ENCODE measurements at regions of chr3 and their contacts with region 1.

Region 1: GRCh38 chr3:107421170-107421792 is 44.0 kb downstream of the CCDC54 start:
- DNase-seq: no peak
- ATAC-seq: peak; percentile 72
- H3K4me3 Mint-ChIP-seq: peak overlapping the region; percentile 49; the same call in 1 of the 2 replicates
- H3K27ac Mint-ChIP-seq: peak overlapping the region; percentile 94; the same call in 1 of the 2 replicates
- H3K4me1 Mint-ChIP-seq: peaks cover 2% of the 10 kb centered on the region
- H3K27me3 Mint-ChIP-seq: no peaks in the 10 kb centered on the region
- CTCF ChIP-seq: peak; percentile 38

Region 2: GRCh38 chr3:107235928-107236315 is 185.4 kb before region 1 on chr3:
- CTCF ChIA-PET with region 1: interaction called, 19 read pairs
- POLR2A ChIA-PET with region 1: no interaction called
- DNase-seq: no peak
- ATAC-seq: peak; percentile 59
- H3K4me3 Mint-ChIP-seq: peak overlapping the region; percentile 1
- H3K27ac Mint-ChIP-seq: no peak overlapping the region
- H3K4me1 Mint-ChIP-seq: peaks cover 26% of the 10 kb centered on the region
- H3K27me3 Mint-ChIP-seq: peaks cover 11% of the 10 kb centered on the region
- CTCF ChIP-seq: peak; percentile 66

Region 3: DNA sequence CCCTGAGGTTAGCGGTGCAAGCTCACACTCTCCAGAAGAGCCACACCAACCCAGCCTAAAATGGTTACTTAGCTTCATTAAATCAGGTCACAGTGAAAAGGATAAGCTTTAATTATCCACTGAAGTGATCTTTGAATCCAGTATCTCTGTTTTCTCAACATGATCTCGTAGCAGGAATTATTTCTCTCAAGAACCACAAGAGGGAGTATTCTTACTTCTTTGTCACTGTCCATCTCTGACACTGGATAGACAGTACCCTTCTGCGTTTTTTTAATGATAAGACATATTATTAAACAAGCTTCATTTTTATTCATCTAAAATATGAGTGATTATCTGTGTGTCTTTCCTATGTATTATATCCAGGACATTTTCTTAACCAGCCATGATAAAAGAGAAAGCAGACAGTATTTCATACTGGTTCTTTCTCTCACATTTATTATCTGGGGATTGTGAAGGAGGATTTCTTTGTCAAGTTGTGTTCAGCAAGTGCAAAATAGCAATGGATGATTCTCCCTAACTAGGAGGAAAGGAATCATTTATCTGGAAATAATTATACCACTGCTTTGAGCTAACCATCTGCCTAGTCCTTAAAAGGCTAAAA is 149.4 kb before region 1 on chr3:
- CTCF ChIA-PET with region 1: interaction called, 30 read pairs
- POLR2A ChIA-PET with region 1: no interaction called
- DNase-seq: no peak
- ATAC-seq: peak; percentile 67
- H3K4me3 Mint-ChIP-seq: no peak overlapping the region
- H3K27ac Mint-ChIP-seq: no peak overlapping the region
- H3K4me1 Mint-ChIP-seq: peaks cover 9% of the 10 kb centered on the region
- H3K27me3 Mint-ChIP-seq: no peaks in the 10 kb centered on the region; the same call in 1 of the 2 replicates
- CTCF ChIP-seq: peak; percentile 57

Region 4: GRCh38 chr3:107284612-107285011 is 136.7 kb before region 1 on chr3:
- CTCF ChIA-PET with region 1: interaction called, 16 read pairs
- POLR2A ChIA-PET with region 1: no interaction called
- DNase-seq: no peak
- ATAC-seq: peak; percentile 4; the same call in 1 of the 2 replicates
- H3K4me3 Mint-ChIP-seq: no peak overlapping the region
- H3K27ac Mint-ChIP-seq: peak overlapping the region; percentile 98
- H3K4me1 Mint-ChIP-seq: peaks cover 37% of the 10 kb centered on the region
- H3K27me3 Mint-ChIP-seq: no peaks in the 10 kb centered on the region; the same call in 1 of the 2 replicates
- CTCF ChIP-seq: no peak

Region 5: GRCh38 chr3:107441617-107442016 is 20.3 kb after region 1 on chr3:
- CTCF ChIA-PET with region 1: interaction called, 10 read pairs
- POLR2A ChIA-PET with region 1: no interaction called
- DNase-seq: peak; percentile 18
- ATAC-seq: peak; percentile 93
- H3K4me3 Mint-ChIP-seq: no peak overlapping the region
- H3K27ac Mint-ChIP-seq: no peak overlapping the region
- H3K4me1 Mint-ChIP-seq: peaks cover 6% of the 10 kb centered on the region
- H3K27me3 Mint-ChIP-seq: no peaks in the 10 kb centered on the region
- CTCF ChIP-seq: no peak